ENCODE measurements at regions of chr2 and their contacts with region 1.

Region 1: DNA sequence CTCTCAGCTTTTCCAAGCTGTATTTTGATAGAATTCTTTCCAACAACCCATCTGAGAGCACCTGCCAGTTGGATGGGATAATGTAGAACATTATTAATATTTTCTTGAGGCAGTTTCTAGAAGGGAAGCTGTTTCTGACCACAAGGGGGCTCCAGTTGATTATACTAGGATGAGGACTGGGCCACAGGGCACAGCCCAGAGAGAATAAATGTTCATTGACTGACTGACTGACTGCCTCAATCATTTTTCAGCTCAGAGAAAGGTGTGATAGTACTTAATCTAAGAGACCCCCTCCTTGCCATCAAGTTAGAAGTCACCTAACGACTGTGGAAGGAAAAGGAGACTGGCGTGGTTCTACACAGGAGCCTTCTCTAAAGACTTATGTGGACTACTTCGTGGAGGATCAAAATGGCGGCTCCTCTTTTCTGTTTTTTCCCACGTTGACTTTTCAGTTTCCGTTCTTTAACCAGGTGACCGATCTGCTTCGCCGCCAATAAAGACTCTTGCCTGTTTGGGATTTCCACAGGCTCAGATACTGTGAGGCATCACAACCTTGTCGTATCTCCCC is 31.9 kb upstream of the CREG2 start:
- DNase-seq: peak; percentile 69
- H3K4me3 ChIP-seq: peak overlapping the region in 1 of 2 experiments; percentile 14; a peak in 1 of 4 replicates
- H3K27ac ChIP-seq: no peak overlapping the region
- H3K4me1 ChIP-seq: no peaks in the 10 kb centered on the region
- H3K27me3 ChIP-seq: no peaks in the 10 kb centered on the region
- CTCF ChIP-seq: peak; percentile 84
- EP300 ChIP-seq: no peak
- RAD21 ChIP-seq: peak; percentile 93

Region 2: DNA sequence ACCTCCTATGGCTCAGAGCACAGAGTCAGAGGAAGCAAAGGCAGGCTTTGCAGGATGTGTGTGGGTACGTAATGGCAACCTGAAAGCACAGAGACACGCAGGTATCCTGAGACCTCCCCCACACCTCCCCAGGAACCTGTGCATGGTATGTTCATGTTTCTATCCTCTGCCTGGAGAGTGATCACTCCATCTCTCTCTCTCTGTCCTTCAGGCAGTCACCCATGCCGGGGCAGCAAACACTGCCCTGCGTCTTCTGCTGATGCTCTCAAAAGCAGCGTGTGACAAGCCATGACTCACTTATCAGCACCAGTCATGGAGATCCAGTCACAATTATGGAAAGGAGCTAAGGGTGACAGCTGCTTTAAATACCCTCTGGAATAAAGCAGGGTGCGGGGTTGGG is 803.7 kb before region 1 on chr2:
- CTCF ChIA-PET with region 1: no interaction called
- POLR2A ChIA-PET with region 1: no interaction called
- DNase-seq: no peak
- H3K4me3 ChIP-seq: no peak overlapping the region
- H3K27ac ChIP-seq: no peak overlapping the region
- H3K4me1 ChIP-seq: no peaks in the 10 kb centered on the region
- H3K27me3 ChIP-seq: no peaks in the 10 kb centered on the region; the same call in 1 of the 2 replicates
- CTCF ChIP-seq: no peak
- EP300 ChIP-seq: no peak
- RAD21 ChIP-seq: no peak

Region 3: DNA sequence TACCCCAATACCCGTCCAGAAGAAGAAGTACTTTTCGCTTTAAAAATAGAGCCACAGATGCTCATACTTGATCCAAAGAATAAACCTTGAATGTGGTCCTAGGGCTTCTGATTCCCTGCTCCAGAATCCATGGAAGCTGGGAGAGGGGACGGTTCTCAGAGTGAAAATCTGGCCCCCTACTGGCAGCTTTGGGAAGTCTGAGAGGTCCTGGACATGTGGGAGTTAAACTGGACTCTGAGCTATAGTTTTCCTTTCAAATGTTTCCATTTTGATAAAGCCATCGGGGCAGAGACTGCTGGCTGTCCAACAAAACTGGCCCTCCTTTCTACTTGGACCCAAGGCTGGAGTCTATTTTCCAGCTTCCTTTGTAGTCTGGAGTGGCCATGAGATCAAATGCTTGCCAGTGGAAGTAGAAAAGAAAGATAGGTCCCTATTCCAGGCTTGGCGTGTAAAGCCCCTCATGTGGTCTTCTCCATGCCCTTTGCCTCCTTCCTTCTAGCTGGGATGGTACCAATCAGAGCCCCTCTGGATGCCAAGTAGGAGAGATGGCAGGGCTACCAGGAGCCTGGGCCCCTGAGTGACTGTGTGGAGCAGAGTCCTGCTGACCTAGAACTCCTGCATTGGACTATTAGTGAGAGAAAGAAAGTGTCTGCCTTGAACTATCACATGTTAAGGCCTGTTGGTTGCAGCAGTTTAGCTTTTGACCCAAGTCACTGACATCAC is 230.3 kb before region 1 on chr2:
- CTCF ChIA-PET with region 1: no interaction called
- POLR2A ChIA-PET with region 1: no interaction called
- DNase-seq: peak; percentile 74
- H3K4me3 ChIP-seq: no peak overlapping the region
- H3K27ac ChIP-seq: no peak overlapping the region
- H3K4me1 ChIP-seq: peaks cover 0 to 2% of the 10 kb centered on the region in 2 experiments; a peak in 1 of 4 replicates
- H3K27me3 ChIP-seq: no peaks in the 10 kb centered on the region
- CTCF ChIP-seq: peak; percentile 70
- EP300 ChIP-seq: no peak
- RAD21 ChIP-seq: peak; percentile 67

Region 4: GRCh38 chr2:101241158-101241557 is 178.0 kb before region 1 on chr2:
- CTCF ChIA-PET with region 1: no interaction called
- POLR2A ChIA-PET with region 1: no interaction called
- DNase-seq: no peak
- H3K4me3 ChIP-seq: no peak overlapping the region
- H3K27ac ChIP-seq: no peak overlapping the region
- H3K4me1 ChIP-seq: no peaks in the 10 kb centered on the region
- H3K27me3 ChIP-seq: no peaks in the 10 kb centered on the region
- CTCF ChIP-seq: no peak
- EP300 ChIP-seq: no peak
- RAD21 ChIP-seq: no peak

Region 5: GRCh38 chr2:101396316-101396717 is 22.9 kb before region 1 on chr2:
- CTCF ChIA-PET with region 1: interaction called, 13 read pairs
- POLR2A ChIA-PET with region 1: no interaction called
- DNase-seq: no peak
- H3K4me3 ChIP-seq: peak overlapping the region; percentile 6 to 23; a peak in 3 of 4 replicates
- H3K27ac ChIP-seq: peak overlapping the region in 1 of 2 experiments; percentile 88; a peak in 3 of 4 replicates
- H3K4me1 ChIP-seq: peaks cover 0 to 8% of the 10 kb centered on the region in 2 experiments; a peak in 2 of 4 replicates
- H3K27me3 ChIP-seq: no peaks in the 10 kb centered on the region
- CTCF ChIP-seq: no peak
- EP300 ChIP-seq: peak in 1 of 2 experiments; percentile 57; a peak in 1 of 4 replicates
- RAD21 ChIP-seq: no peak

Region 6: GRCh38 chr2:101432411-101433181 is 13.4 kb after region 1 on chr2:
- CTCF ChIA-PET with region 1: interaction called, 17 read pairs
- POLR2A ChIA-PET with region 1: no interaction called
- DNase-seq: no peak
- H3K4me3 ChIP-seq: no peak overlapping the region
- H3K27ac ChIP-seq: peak overlapping the region in 1 of 2 experiments; percentile 58; a peak in 2 of 4 replicates
- H3K4me1 ChIP-seq: peaks cover 11 to 16% of the 10 kb centered on the region in 2 experiments
- H3K27me3 ChIP-seq: no peaks in the 10 kb centered on the region
- CTCF ChIP-seq: no peak
- EP300 ChIP-seq: no peak
- RAD21 ChIP-seq: no peak

Region 7: DNA sequence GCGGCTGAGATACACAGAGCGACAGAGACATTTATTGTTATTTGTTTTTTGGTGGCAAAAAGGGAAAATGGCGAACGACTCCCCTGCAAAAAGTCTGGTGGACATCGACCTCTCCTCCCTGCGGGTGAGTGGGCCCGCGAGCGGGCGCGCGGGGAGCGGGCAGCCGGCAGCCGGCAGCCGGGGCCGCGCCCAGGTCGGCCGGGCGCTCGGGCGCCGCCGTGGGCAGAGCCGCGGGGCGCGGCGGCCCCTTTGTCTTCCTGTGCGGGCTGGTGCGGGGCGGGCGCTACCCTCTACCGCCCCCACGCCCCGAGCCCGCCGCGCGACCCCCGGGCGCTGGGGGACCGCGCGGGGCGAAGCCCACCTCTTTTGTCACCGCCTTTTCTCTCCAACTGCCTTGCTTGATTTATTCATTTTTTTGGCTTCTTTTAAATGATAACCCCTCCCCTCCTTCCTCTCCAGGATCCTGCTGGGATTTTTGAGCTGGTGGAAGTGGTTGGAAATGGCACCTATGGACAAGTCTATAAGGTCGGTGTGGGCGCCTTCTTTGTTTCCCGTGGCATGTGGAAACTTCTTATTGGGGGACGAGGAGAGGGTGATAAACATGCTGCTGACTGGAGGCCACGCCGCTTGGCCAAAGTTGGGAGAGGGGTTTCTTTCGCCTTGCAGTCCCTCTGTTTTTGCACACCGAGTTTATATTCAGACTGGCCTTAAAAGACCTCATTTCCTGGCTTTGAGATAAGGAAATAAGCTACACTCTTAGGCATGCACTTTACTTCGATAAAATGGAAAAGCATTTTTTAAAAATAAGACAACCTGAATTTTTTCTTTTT is 279.0 kb after region 1 on chr2:
- CTCF ChIA-PET with region 1: interaction called, 10 read pairs
- POLR2A ChIA-PET with region 1: interaction called, 4 read pairs
- DNase-seq: peak; percentile 78
- H3K4me3 ChIP-seq: peak overlapping the region; percentile 81 to 89
- H3K27ac ChIP-seq: peak overlapping the region; percentile 65 to 86
- H3K4me1 ChIP-seq: peaks cover 12 to 13% of the 10 kb centered on the region in 2 experiments
- H3K27me3 ChIP-seq: no peaks in the 10 kb centered on the region
- CTCF ChIP-seq: peak; percentile 22; the same call in 1 of the 2 replicates
- EP300 ChIP-seq: no peak
- RAD21 ChIP-seq: no peak